Posterior vena cava (tissue), 2 donors: ENCODE measurements at regions of chr10 and their contacts with region 1.

Region 1: GRCh38 chr10:20350509-20350908 is 534.3 kb downstream of the PLXDC2 start:
- DNase-seq: no peak

Region 2: GRCh38 chr10:20369863-20370736 is 19.6 kb after region 1 on chr10:
- intact Hi-C with region 1: no loop called
- DNase-seq: no peak

Region 3: DNA sequence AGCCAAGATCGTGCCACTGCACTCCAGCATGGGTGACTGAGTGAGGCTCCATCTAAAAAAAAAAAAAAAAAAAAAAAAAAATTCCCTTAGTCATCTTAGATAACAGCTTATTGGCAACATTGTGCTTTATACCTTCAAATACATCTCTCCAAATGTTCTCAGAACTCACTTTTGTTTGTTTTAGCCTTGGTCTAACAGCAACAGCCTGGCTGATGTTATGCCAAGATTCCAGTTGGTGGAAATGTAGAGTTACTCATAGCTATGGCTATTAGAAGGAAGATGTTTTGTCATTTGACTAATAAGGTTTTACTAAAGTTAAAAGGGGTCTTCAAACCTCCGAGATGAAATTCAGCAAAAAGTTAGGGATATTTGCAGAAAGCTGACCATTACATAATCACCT is 65.2 kb after region 1 on chr10:
- intact Hi-C with region 1: loop called in 1 of 2 experiments (anchors 2 kb)
- DNase-seq: no peak

Region 4: DNA sequence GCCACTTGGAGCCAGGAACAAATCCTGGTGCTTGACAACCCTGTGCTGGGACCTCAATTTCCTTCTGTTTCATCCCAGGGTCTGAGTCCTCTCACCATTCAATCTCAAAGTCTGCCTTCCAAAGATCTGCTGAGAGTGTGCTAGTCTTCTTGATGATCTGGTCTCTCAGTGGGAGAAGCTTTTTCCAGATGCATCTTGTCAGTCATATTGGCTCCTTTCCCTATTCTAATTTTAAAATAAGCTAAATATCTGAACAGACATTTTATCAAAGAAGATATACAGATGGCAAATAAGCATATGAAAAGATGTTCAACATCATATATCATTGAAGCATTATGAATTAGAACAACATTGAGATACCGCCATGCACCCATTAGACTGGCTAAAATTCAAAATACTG is 77.3 kb after region 1 on chr10:
- intact Hi-C with region 1: no loop called
- DNase-seq: no peak